ENCODE measurements at regions of chr13 and their contacts with region 1.

Region 1: DNA sequence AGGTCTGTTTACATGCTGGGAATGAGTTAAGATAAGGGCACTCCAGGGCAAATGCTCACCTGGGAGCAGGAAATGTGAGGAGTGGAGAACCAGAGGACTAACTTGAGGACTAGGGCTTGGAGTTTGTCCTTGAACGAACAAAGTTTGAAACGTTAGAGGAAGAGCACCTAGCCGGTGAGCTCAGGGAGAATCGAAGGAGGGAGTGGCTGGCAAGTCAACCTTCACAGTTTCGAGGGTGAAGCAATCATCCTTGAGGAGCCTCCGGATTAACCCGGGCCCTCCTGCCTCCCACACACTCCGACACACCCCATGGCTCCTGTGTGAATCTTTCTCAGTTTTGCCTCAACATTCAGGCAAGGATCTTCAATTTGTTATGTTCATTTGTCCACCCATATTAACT is 58.6 kb downstream of the LMO7 start:
- DNase-seq: no peak
- H3K27ac ChIP-seq: no peak overlapping the region
- CTCF ChIP-seq: no peak

Region 2: DNA sequence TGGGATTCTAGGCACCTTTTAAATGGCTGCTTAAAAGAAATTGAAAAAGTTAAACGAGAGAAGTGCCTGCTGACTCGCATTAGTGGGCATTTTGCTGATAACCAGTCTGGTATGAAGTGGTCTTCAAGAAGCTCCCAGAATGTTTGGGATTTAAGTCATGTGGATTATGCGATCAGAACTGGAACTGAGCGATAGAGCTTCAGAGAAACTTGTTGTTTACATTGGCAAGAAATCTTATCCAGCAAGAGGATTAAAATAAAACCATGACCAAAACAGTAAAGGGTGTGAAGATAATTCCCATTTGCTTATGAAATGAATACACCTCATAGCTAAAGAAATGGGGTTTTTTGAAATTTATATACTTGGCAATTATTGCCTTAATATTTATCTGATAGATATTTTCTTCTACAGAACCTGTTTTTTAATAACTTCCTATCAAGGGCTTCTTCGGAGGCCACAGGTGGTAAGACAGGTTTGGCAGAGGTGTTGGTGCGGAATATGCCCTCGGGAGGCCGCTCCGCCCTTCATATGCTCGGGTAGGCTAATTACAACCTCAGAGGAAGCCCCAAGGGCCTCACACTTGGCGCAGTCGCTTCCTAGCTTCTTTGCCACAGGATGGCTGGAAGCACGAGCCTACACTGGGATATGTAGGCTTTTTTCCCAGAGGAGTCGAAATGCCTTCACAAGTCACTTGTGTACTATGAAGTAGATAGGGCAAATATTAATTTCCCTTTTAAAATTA is 10.0 kb after region 1 on chr13:
- CTCF ChIA-PET with region 1: interaction called, 19 read pairs
- POLR2A ChIA-PET with region 1: no interaction called
- DNase-seq: peak; percentile 72
- H3K27ac ChIP-seq: peak overlapping the region; percentile 70
- CTCF ChIP-seq: no peak

Region 3: GRCh38 chr13:75760131-75761021 is 65.7 kb after region 1 on chr13:
- CTCF ChIA-PET with region 1: interaction called, 10 read pairs
- POLR2A ChIA-PET with region 1: no interaction called
- DNase-seq: peak; percentile 68
- H3K27ac ChIP-seq: no peak overlapping the region
- CTCF ChIP-seq: no peak

Region 4: DNA sequence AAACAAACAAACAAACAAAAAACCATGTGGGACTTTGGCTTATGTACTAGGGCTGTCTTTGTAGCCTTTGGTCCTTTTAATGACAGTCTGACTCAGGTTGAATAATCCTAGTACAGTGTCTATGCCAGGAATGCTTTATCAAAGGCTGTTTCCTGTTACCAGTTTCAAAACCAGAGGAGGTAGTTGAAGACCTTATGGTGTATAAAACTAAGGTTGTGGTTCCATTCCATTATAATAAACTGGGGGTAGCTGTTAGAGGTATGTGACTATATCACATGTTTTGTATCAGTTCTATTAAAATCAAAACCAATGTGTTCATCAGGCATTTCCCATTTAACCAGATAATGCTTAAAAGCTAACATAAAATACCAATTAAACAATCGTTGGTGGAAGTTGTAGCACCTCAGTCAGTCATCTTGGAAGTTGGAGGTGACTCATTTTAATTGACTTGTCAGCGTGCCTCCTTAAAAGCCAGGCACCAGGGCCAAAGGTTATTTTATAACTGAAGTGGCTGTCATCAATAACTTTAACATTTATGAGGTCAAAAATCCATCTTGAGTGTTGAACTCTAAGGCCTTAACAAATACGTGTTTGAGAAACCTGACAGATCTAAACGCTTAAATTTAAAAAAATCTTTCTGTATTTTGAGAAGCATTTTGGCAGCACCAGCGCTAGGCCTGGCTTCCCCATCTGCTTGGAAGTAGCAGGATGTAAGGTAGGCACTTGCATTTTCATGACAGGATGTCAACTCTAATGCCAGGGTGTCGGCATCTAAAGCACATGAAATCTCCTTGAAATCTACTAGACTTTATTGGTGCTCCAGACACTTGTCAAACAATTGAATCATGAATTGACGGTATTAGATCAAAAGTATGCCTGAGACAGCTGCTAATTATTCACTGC is 103.9 kb after region 1 on chr13:
- CTCF ChIA-PET with region 1: interaction called, 14 read pairs
- POLR2A ChIA-PET with region 1: no interaction called
- DNase-seq: peak; percentile 35
- H3K27ac ChIP-seq: no peak overlapping the region
- CTCF ChIP-seq: no peak

Measured in RWPE1 (cell line).